Heart left ventricle (tissue), 16 donors: ENCODE measurements at regions of chr5 and their contacts with region 1.

Region 1: GRCh38 chr5:37005946-37006540 is 129.5 kb downstream of the NIPBL start:
- DNase-seq: no peak
- ATAC-seq: no peak
- H3K4me3 ChIP-seq: no peak overlapping the region
- H3K27ac ChIP-seq: no peak overlapping the region
- H3K4me1 ChIP-seq: no peaks in the 10 kb centered on the region
- H3K27me3 ChIP-seq: no peaks in the 10 kb centered on the region
- CTCF ChIP-seq: peak; percentile 43 to 78 (median 66)
- POLR2A ChIP-seq: no peak

Region 2: DNA sequence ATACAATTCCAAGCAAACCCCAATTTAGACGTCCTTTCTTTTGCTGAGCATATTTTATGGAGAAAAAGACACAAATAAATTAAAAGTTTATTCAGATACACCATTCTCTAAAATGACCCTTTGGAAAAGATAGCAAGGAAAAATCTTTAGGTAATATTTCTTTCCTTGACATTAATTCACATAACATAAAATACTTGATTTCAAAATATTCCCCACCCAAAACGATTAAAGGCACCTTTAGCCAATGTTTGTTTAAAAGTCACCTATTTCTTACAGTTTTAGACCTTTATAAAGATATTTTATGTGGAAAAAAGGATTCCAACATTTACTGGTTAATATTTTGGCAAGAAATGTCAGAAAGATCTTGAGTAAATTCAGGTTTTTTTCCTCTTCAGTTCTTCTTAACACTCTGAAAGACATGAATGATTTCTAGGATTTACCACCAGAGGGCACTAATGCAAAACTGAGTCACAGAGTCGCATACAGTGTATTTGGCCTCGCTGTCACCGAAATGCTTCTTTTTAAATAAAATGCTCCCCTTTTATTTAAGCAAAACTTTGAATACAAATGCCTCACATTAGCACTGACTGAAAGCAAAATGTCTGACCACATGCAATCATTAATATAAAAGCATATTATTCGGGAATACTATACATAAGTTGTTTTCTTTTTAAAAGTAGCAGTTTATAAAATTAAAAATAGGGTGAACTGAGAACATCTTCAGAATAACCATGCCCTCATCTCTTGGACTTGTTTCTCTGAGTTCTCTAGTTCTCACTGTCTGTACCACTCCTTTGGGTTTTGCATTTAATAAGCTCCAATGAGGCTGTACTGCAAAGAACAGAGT is 277.1 kb before region 1 on chr5:
- intact Hi-C with region 1: loop called in 6 of 10 experiments (anchors 1 to 5 kb)
- DNase-seq: peak in 1 of 5 donors; percentile 17
- ATAC-seq: peak in 3 of 4 donors; percentile 45 to 71 (median 57)
- H3K4me3 ChIP-seq: no peak overlapping the region
- H3K27ac ChIP-seq: no peak overlapping the region
- H3K4me1 ChIP-seq: peaks cover 0 to 20% (median 0%) of the 10 kb centered on the region in 12 donors
- H3K27me3 ChIP-seq: no peaks in the 10 kb centered on the region
- CTCF ChIP-seq: peak; percentile 61 to 81 (median 66)
- POLR2A ChIP-seq: no peak

Region 3: GRCh38 chr5:36734422-36734821 is 271.6 kb before region 1 on chr5:
- intact Hi-C with region 1: loop called in 7 of 10 experiments (anchors 1 to 5 kb)
- DNase-seq: no peak
- ATAC-seq: peak in 3 of 4 donors; percentile 61 to 65 (median 61)
- H3K4me3 ChIP-seq: no peak overlapping the region
- H3K27ac ChIP-seq: no peak overlapping the region
- H3K4me1 ChIP-seq: peaks cover 0 to 2% (median 0%) of the 10 kb centered on the region in 12 donors
- H3K27me3 ChIP-seq: peaks cover 0 to 27% (median 0%) of the 10 kb centered on the region in 9 donors
- CTCF ChIP-seq: peak in 6 of 12 donors; percentile 5 to 27 (median 18)
- POLR2A ChIP-seq: no peak

Region 4: DNA sequence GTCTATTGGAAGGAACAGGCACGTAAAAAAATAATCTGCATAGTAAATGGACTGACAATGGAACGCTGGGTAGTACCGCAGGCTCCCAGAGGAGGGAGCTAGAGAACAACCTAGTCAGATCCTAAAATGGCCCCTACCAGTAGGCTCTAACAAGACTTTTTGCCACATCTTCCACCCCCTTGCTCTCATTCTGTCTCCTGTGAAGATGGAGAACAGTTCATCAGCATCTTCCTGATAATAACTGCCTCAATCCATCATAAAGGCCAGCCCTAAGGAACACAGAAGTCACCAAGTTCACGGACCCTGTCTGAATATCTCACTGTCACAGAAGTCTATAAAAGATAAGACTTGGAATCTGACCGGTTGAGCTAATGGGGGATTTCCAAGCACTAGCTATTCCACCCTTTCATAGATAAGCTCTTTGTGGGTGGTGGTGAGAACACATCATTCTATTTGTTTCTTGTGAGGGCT is 266.3 kb before region 1 on chr5:
- intact Hi-C with region 1: loop called in 6 of 10 experiments (anchors 5 kb)
- DNase-seq: peak; percentile 18 to 66 (median 43)
- ATAC-seq: peak; percentile 15 to 53 (median 45)
- H3K4me3 ChIP-seq: no peak overlapping the region
- H3K27ac ChIP-seq: no peak overlapping the region
- H3K4me1 ChIP-seq: peaks cover 0 to 17% (median 5%) of the 10 kb centered on the region in 12 donors
- H3K27me3 ChIP-seq: peaks cover 0 to 24% (median 0%) of the 10 kb centered on the region in 9 donors
- CTCF ChIP-seq: peak; percentile 46 to 74 (median 66)
- POLR2A ChIP-seq: no peak

Region 5: DNA sequence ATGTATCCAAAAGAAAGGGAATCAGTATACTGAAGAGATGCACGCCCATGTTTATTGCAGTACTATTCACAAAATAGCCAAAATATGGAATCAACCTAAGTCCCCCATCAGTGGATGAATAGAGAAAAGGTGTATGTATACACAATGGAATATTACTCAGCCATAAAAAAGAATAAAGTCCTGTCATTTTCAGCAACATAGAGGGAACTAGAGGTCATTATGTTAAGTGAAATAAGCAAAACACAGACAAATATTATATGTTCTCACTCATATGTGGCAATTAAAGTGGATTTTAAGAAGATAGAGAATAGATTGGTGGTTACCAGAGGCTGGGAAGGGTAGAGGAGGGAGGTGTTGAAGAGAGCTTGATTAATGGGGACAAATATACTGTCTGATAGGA is 40.9 kb before region 1 on chr5:
- intact Hi-C with region 1: no loop called
- DNase-seq: no peak
- ATAC-seq: no peak
- H3K4me3 ChIP-seq: no peak overlapping the region
- H3K27ac ChIP-seq: no peak overlapping the region
- H3K4me1 ChIP-seq: peaks cover 0 to 2% (median 0%) of the 10 kb centered on the region in 12 donors
- H3K27me3 ChIP-seq: no peaks in the 10 kb centered on the region
- CTCF ChIP-seq: no peak
- POLR2A ChIP-seq: no peak

Region 6: DNA sequence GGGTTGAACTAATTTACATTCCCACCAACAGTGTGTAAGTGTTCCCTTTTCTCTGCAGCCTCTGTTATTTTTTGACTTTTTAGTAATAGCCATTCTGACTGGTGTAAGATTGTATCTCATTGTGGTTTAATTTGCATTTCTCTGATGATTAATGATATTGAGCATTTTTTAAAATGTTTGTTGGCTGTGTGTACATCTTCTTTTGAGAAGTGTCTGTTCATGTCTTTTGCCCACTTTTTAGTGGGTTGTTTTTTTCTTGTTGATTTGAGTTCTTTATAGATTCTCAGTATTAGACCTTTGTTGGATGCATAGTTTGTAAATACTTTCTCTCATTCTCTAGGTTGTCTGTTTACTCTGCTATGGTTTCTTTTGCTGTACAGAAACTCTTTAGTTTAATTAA is 27.8 kb before region 1 on chr5:
- intact Hi-C with region 1: no loop called
- DNase-seq: no peak
- ATAC-seq: no peak
- H3K4me3 ChIP-seq: no peak overlapping the region
- H3K27ac ChIP-seq: no peak overlapping the region
- H3K4me1 ChIP-seq: no peaks in the 10 kb centered on the region
- H3K27me3 ChIP-seq: no peaks in the 10 kb centered on the region
- CTCF ChIP-seq: no peak
- POLR2A ChIP-seq: no peak